ENCODE measurements at regions of chr2 and their contacts with region 1.

Region 1: DNA sequence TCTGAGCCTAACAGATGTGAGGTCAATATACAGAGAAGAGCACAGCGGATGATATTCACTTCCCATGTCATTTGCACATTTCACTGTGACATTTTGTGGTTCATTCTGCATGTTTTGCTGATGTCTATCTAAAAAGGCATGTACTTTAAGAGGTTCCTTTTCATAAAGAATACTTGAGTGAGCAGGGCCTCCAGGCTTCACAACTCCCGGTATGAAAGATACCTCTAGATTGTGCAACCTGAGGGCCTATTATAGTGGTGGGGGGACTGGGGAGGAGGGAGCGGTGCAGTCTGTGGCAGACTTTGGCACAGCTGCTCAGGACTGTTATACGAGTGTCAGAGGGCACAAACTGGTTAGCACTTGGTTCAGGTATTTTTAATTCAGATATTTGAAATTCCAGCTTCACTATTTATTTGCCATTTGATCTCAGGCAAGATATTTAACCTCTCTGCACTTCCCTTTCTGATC is 54.7 kb downstream of the CPO start:
- DNase-seq: no peak
- ATAC-seq: no peak

Region 2: DNA sequence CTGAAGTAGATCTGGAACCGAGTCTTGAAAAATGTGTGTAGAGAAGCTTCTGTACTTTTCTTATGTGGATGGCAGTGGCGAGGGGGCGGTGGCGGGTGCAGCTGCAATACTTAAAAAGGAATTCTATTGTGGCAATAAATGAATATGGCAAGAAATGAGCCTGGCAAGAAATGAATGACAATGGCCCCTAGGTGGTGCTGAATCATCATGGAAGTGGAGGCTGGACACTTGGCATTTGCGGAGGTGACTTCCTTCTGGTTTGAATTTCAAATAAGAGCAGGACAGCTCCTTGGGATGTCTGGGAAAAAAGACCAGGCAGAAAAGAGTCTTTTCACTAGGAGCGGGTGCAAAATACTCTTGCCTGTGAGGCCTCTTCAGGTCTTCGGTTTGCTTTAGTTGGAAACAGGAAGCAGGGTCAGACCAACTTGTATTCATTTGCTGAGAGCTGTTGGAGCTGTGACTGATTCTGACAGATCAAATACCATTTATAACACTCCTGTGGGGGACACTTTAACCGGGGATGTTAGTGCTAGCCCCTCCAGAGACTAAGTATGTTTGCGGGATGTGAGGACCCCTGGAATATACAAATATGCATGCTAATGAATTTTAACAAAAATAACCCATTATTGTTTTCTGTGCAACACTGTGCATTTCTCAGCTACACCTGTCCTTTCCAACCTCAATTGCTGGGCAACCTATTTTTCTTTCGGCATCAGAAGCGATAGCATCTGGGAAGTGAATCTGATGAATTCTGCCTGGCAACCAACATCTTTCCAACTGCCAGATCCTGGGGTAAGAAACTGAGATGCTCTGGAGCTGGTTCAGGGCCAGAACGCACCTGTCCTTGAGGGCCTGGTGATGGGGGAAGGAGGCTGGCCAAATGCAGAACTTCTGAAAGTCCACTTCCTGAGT is 193.3 kb before region 1 on chr2:
- intact Hi-C with region 1: loop called in 1 of 2 experiments (anchors 5 kb)
- DNase-seq: peak; percentile 50 to 60
- ATAC-seq: peak; percentile 91

Region 3: GRCh38 chr2:207184348-207184747 is 190.3 kb after region 1 on chr2:
- intact Hi-C with region 1: no loop called
- DNase-seq: no peak
- ATAC-seq: no peak

Region 4: GRCh38 chr2:207283356-207283755 is 289.3 kb after region 1 on chr2:
- intact Hi-C with region 1: no loop called
- DNase-seq: no peak
- ATAC-seq: no peak